GM10248 (cell line): ENCODE measurements at regions of chr11 and their contacts with region 1.

Region 1: GRCh38 chr11:117946842-117947526 is 17.8 kb upstream of the TMPRSS13 start:
- DNase-seq: peak; percentile 79
- CTCF ChIP-seq: peak; percentile 93

Region 2: GRCh38 chr11:117690484-117691217 is 256.3 kb before region 1 on chr11:
- CTCF ChIA-PET with region 1: no interaction called
- POLR2A ChIA-PET with region 1: no interaction called
- DNase-seq: peak; percentile 45
- CTCF ChIP-seq: no peak

Region 3: DNA sequence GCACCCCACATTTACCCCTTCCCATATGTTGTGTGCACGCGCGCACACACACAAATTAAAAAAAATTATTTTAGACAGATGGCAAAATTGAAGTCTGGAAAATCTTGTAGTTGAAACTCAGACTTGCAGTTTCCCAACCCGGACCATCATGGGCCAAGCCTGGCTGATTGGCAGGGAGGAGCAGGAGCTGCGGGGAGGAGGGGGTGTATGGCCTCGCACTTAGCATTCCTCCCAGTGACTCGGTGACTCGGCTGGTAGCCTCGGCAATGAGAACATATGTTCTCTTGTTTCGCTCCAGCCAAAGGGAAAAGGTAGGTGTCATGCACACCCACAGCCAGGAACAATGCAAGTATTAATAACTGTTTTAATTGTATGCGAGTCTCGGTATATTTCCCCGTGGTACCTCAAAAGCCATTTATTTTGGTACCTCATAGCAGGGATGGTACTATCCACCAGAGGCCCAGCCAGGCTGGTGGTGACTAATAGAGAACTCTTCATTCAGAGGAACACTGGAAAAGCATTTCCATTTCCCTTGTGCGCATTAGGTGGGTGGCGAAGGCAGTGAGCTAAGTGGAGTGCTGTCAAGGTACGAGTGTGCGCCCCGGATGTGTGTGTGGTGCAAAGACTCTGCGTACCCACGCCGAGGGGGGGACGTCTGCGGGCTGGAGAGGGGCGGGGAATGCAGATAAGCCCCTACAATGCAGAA is 242.4 kb before region 1 on chr11:
- CTCF ChIA-PET with region 1: no interaction called
- POLR2A ChIA-PET with region 1: no interaction called
- DNase-seq: no peak
- CTCF ChIP-seq: no peak

Region 4: DNA sequence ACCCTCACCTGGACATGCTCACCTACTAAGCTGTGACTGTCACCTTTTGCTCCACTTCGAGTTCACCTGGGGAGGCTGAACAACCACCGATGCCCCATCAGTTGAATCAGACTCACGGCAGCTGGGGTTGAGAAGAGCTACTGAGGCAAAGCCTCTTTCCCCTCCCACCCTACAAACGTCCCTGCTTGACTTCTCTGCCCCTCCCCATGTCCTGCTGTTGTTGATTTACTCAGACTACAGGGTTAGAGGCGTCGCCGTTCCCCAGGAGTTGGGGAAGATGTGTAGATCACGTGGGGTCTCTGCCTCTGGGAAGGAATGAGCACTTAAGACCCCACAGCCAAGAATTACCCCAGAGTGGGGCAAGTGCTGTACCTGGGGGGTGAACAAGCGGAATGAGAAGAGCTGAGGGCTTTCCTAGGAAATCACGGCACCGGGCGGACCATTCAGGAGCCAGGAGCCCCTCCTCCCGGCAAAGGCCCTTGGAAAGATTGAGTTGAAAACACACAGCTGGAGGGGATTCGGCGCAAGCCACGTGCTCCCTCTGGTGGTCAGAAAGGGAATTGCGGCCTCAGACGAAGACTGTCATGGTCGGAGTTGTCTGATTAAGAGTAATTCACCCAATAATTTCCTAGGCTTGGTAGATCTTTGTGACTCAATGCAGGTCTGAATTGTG is 129.5 kb before region 1 on chr11:
- CTCF ChIA-PET with region 1: interaction called, 117 read pairs
- POLR2A ChIA-PET with region 1: no interaction called
- DNase-seq: peak; percentile 70
- CTCF ChIP-seq: peak; percentile 96

Region 5: GRCh38 chr11:117900121-117900648 is 46.8 kb before region 1 on chr11:
- CTCF ChIA-PET with region 1: interaction called, 21 read pairs
- POLR2A ChIA-PET with region 1: no interaction called
- DNase-seq: no peak
- CTCF ChIP-seq: no peak

Region 6: GRCh38 chr11:117959438-117960149 is 12.6 kb after region 1 on chr11:
- CTCF ChIA-PET with region 1: interaction called, 20 read pairs
- POLR2A ChIA-PET with region 1: no interaction called
- DNase-seq: no peak
- CTCF ChIP-seq: no peak

Region 7: DNA sequence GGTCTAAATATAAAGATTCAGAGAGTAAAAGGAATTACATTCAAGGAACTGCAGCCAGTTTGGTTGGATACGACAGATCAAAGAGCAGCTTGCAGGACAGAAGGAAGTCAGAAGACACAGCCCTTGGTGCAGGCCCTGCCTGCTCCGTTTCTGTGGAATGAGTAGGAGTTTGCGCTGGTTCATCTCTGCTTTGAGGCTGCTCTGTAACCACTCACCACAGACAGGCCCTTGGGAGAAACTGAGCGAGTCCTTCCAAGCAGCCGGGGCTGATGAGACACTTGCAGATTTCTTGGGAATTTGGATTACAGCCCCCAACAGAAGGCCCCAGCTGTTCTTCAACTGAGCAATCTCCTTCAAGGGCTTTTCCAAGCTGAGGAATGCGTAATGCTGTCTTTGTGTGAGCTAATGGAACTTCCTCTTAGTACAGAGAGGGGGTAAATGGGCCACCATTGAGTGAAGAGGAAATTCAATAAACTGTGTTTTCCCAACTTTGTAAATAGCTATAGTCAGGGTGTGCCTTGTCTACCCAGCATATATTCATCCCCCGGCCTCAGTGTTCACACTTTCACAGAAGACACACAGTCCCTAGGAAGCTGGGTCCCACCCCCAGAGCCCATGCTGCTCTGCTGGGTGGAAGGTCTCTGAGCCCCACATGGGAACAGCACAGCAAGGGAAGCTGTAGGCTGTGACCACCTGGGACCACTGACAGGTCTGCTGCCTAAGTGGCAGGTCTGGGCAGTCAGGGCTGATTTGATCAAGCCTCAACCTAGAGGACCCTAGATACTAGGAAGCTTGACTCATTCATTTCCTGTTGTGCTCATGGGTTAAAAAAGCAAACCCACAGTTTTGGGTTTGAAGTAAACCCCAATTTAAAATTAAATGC is 55.8 kb after region 1 on chr11:
- CTCF ChIA-PET with region 1: interaction called, 16 read pairs
- POLR2A ChIA-PET with region 1: no interaction called
- DNase-seq: no peak
- CTCF ChIP-seq: no peak

Region 8: DNA sequence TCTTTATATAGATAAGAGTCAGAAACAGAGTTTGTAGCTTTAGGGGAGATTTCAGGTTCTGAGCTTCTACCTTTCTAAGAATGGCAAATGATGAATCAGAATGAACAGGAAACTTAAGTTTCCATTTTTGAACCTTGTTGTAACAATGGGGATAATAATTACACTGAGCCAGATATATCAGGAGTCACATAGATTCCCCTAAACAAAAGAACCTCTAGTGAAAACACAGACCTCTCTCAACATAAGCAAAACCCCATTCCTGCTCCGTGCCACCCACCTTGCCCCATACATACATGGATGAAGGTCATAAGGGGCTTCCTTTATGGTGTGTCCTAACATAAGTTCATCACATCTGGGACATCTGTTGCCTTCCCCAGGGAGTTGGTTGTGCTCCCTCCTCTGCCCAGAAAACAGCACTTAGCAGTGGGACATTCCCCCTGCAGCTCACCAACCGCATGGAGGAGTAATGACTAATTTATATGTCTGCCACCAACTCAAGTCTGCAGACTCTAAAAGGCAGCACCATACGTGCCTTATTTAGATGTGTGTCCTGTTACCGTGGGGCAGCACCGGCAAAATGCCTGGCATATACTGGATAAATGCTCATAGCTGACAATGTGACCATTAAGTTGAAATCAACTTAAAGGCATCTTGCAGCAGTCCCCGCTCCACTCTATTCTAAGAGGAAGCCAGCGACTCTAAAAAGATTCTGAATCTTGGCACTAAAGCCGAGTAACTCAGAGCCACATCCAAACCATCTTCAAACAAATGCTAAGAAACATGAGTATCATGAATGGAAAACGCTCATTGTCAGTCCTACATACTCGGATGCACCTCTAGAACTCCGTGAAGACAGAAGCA is 269.9 kb after region 1 on chr11:
- CTCF ChIA-PET with region 1: interaction called, 10 read pairs
- POLR2A ChIA-PET with region 1: no interaction called
- DNase-seq: peak; percentile 50
- CTCF ChIP-seq: peak; percentile 13